ENCODE measurements at regions of chr20 and their contacts with region 1.

Region 1: GRCh38 chr20:45445805-45446562 is 23.6 kb upstream of the WFDC2 start:
- DNase-seq: no peak
- H3K4me3 ChIP-seq: peak overlapping the region; percentile 26 to 54 (median 42)
- H3K27ac ChIP-seq: peak overlapping the region in 3 of 4 donors; percentile 89 to 95 (median 94)
- H3K4me1 ChIP-seq: peaks cover 3 to 59% (median 32%) of the 10 kb centered on the region in 4 donors
- H3K27me3 ChIP-seq: no peaks in the 10 kb centered on the region
- CTCF ChIP-seq: peak in 2 of 4 experiments; percentile 35 to 40
- EP300 ChIP-seq: no peak
- POLR2A ChIP-seq: no peak

Region 2: DNA sequence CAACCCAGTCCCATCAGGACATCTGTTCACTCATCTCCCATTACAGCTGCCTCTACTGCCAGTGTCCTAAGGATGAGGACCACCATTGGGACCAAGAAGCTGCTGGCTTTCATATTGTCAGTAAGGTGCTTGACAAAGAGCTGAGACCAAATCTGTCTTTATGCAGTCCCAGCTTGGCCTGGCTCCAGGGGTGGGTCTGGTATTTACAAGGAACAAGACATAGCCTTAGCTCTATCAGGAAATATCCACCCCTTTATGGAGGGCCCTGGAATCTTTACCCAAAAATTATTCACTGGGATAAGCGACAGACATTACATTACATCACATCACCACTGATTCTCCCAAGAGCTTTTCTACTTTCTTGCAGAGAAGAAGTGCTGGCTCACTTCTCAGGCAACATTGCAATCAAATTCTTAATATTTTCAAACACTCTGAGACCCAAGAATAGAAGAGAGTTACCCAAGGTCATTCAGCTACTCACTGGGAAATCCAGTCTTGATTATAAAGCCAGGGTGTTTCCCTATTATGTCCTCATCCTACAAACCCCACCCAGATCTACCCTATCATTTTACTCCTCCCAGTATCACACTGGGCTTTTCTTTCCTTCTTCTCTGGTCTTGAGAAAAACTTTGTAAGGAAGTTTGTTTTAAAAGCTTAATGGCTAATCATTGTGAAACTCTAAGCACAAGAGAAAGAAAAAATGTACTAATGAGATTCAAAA is 282.7 kb before region 1 on chr20:
- intact Hi-C with region 1: no loop called
- DNase-seq: no peak
- H3K4me3 ChIP-seq: no peak overlapping the region
- H3K27ac ChIP-seq: no peak overlapping the region
- H3K4me1 ChIP-seq: peaks cover 0 to 4% (median 3%) of the 10 kb centered on the region in 4 donors
- H3K27me3 ChIP-seq: no peaks in the 10 kb centered on the region
- CTCF ChIP-seq: no peak
- EP300 ChIP-seq: no peak
- POLR2A ChIP-seq: no peak

Region 3: DNA sequence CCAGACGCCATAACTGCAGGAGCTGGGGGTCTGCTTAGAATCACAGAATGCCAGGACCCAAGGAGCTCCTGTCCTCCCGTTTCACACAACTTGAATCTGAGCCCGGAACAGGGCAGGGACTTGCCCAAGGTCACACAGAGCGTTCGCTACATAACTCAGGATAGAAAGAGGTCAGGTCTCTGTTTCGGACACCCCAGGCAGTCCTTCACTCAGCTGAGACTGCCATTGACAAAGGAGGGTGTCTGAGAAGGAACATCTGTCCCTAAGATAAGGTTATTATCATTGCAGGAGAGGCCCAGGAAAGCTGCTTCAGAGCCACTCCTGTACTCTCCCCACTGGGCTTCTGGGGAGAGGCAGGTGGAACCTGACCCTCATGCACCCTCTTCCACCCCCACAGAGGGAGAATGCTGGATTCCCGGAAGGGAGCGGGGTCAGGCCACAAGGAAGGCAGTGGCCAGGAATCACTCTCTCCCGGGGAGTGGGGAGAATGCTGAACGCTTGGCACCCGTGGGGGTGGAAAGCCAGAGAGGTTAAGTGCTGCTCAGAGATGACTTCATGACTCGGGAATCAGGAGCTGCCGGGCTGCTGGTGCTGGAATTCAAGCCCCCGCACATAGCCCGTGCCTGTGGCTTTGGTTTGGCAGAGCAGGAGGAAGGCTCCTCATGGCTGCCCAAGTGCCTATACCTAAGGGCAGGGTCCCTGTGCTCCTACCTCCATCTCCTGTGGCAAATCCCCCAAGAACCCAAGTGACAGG is 108.4 kb before region 1 on chr20:
- intact Hi-C with region 1: loop called (anchors 5 kb)
- DNase-seq: peak; percentile 83
- H3K4me3 ChIP-seq: peak overlapping the region in 1 of 4 donors; percentile 12
- H3K27ac ChIP-seq: peak overlapping the region; percentile 94 to 99 (median 97)
- H3K4me1 ChIP-seq: peaks cover 6 to 73% (median 67%) of the 10 kb centered on the region in 4 donors
- H3K27me3 ChIP-seq: no peaks in the 10 kb centered on the region
- CTCF ChIP-seq: no peak
- EP300 ChIP-seq: peak in 1 of 4 donors; percentile 42
- POLR2A ChIP-seq: no peak

Region 4: GRCh38 chr20:45373353-45374100 is 72.5 kb before region 1 on chr20:
- intact Hi-C with region 1: no loop called
- DNase-seq: peak; percentile 96
- H3K4me3 ChIP-seq: peak overlapping the region; percentile 26 to 55 (median 48)
- H3K27ac ChIP-seq: peak overlapping the region; percentile 77 to 92 (median 82)
- H3K4me1 ChIP-seq: peaks cover 0 to 19% (median 15%) of the 10 kb centered on the region in 4 donors
- H3K27me3 ChIP-seq: no peaks in the 10 kb centered on the region
- CTCF ChIP-seq: peak; percentile 81 to 97 (median 90)
- EP300 ChIP-seq: no peak
- POLR2A ChIP-seq: no peak

Region 5: GRCh38 chr20:45406259-45407066 is 39.5 kb before region 1 on chr20:
- intact Hi-C with region 1: loop called (anchors 2 kb)
- DNase-seq: peak; percentile 91
- H3K4me3 ChIP-seq: peak overlapping the region; percentile 84 to 97 (median 92)
- H3K27ac ChIP-seq: peak overlapping the region; percentile 94 to 99 (median 97)
- H3K4me1 ChIP-seq: peaks cover 0 to 42% (median 25%) of the 10 kb centered on the region in 4 donors
- H3K27me3 ChIP-seq: no peaks in the 10 kb centered on the region
- CTCF ChIP-seq: no peak
- EP300 ChIP-seq: no peak
- POLR2A ChIP-seq: peak in 1 of 2 donors; percentile 9

Region 6: GRCh38 chr20:45470262-45470931 is 24.4 kb after region 1 on chr20:
- intact Hi-C with region 1: loop called (anchors 2 kb)
- DNase-seq: peak; percentile 87
- H3K4me3 ChIP-seq: peak overlapping the region; percentile 36 to 60 (median 50)
- H3K27ac ChIP-seq: peak overlapping the region; percentile 23 to 92 (median 86)
- H3K4me1 ChIP-seq: peaks cover 0 to 44% (median 32%) of the 10 kb centered on the region in 4 donors
- H3K27me3 ChIP-seq: no peaks in the 10 kb centered on the region
- CTCF ChIP-seq: no peak
- EP300 ChIP-seq: no peak
- POLR2A ChIP-seq: peak; percentile 31 to 56

Region 7: DNA sequence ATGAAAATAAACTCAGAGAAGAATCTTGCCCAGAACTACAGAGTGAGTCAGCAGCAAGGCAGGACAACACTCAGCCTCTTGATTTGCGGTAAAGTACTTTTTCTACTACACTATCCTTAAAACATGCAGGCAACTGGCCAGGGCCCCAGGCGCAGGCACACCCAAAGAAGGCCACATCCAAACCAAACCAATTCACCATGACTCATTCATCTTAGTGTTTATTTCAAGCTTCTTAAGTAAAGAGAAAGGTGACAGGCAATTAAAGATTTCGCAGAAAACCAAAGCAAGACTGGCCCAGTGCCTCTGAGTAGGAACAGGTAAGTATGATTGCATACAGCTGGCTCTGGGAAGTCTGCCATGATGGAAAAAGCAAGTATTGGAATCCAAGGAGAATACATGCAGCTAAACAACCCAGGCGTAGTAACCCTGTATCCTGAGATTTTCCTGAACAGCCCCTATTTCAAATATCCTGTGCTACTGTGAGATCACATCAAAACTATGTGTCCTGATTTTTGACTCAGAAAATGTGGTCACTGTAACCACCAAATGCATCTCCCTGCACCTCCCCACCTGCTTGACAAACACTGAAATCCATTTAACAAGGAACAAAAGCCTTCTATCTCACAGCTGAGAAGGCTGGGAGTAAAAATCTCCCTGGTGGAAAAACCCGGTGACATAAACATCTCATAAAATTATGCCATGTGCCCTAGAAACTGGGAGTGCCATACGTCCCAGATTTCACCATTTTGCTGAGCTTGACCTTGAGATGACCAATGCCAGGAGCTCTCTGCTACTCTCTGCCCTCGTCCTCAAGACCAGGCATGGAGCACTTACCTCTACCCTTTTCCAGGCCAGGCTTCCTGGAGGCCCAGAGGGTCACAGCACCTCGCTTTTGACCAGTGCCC is 333.3 kb after region 1 on chr20:
- intact Hi-C with region 1: loop called (anchors 1 kb)
- DNase-seq: peak; percentile 98
- H3K4me3 ChIP-seq: no peak overlapping the region
- H3K27ac ChIP-seq: peak overlapping the region; percentile 89 to 94 (median 93)
- H3K4me1 ChIP-seq: peaks cover 0 to 75% (median 71%) of the 10 kb centered on the region in 4 donors
- H3K27me3 ChIP-seq: no peaks in the 10 kb centered on the region
- CTCF ChIP-seq: no peak
- EP300 ChIP-seq: peak; percentile 53 to 96 (median 92)
- POLR2A ChIP-seq: no peak

Measured in sigmoid colon (tissue), 7 donors.